ENCODE measurements at regions of chr5 and their contacts with region 1.

Region 1: DNA sequence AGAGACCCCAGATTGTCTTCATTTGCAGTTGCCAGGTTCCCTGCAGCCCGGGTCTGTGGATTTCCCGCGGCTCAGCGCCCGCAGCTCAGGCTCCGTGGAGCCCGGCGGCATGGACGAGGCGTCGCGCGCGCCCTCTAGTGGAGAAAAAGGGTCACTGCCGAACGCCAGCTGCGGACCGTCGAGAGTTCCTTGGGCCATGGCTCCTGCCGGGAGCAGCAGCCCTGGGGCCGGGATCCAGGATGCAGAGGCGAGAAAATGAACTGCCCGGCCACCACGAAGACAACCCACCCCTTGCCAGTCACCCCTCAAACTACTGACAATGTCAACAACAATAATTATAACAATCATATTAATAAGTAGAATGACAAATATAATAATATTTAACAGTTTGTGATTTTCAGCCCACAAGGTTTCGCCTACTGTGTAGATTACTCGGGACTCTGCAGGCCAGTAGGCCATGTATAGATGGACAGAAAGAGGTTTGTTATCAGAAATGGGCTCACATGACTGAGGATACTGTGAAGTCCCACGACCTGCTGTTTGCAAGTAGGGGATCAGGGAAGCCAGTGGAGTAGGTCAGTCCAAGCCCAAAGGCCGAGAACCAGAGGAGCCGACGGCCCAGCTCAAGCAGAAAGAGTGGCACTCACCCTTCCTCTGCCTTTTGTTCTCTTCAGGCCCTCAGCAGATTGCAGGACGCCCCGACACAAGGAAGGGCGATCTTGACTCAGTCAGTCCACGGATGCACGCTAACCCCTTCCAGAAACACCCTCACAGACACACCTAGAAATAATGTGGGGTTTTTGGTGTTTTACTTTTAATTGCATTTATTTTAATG is 43.1 kb downstream of the BOD1 start:
- DNase-seq: peak; percentile 35 to 85
- H3K4me3 ChIP-seq: peak overlapping the region in 1 of 2 donors; percentile 0
- H3K27ac ChIP-seq: no peak overlapping the region
- H3K4me1 ChIP-seq: peaks cover 0 to 7% (median 0%) of the 10 kb centered on the region in 4 donors
- H3K27me3 ChIP-seq: no peaks in the 10 kb centered on the region
- CTCF ChIP-seq: peak; percentile 94 to 98

Region 2: GRCh38 chr5:173448856-173449255 is 124.5 kb before region 1 on chr5:
- intact Hi-C with region 1: loop called (anchors 5 kb)
- DNase-seq: no peak
- H3K4me3 ChIP-seq: no peak overlapping the region
- H3K27ac ChIP-seq: no peak overlapping the region
- H3K4me1 ChIP-seq: peaks cover 0 to 13% (median 0%) of the 10 kb centered on the region in 4 donors
- H3K27me3 ChIP-seq: no peaks in the 10 kb centered on the region
- CTCF ChIP-seq: no peak